ENCODE measurements at regions of chr12 and their contacts with region 1.

Region 1: GRCh38 chr12:131808744-131809371 is 19.3 kb upstream of the MMP17 start:
- ATAC-seq: peak in 2 of 8 experiments; percentile 13 to 71
- H3K4me3 ChIP-seq: no peak overlapping the region
- H3K27ac ChIP-seq: no peak overlapping the region
- H3K4me1 ChIP-seq: no peaks in the 10 kb centered on the region

Region 2: GRCh38 chr12:131608740-131609690 is 199.8 kb before region 1 on chr12:
- in situ Hi-C with region 1: loop called in 2 of 9 experiments (anchors 25 kb)
- ATAC-seq: peak; percentile 90 to 95 (median 92)
- H3K4me3 ChIP-seq: no peak overlapping the region
- H3K27ac ChIP-seq: no peak overlapping the region
- H3K4me1 ChIP-seq: peaks cover 6 to 16% of the 10 kb centered on the region in 2 donors